Psoas muscle (tissue), 8 donors: ENCODE measurements at regions of chr1 and their contacts with region 1.

Region 1: DNA sequence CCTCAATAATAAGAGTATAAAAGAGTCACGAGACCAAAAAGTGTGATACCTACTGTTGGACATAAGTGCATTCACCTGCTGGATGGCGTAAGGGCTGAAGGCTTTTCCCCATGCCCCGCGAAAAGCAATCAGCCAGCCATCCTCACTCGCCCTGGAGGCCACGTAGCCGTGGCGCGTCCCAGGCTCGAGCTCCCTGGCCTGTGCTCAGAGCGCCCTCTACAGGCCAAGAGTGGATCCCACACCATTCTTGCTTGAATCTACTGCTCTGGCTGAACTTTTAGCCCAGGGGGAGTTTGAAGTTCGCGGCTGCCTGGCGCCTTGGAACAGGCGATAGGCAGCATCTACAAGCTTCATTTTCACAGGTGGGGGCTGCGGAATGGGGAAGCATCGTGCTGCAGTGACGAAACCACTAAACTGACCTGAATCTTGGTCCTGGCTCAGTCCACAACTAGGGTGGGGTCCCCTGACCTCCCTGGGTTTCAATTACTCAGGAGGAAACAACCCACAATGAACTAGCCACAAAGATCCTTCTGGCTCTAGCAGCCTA is 70.3 kb upstream of the SERBP1 start:
- DNase-seq: peak; percentile 87 to 89
- ATAC-seq: peak; percentile 97 to 99 (median 98)
- H3K4me3 ChIP-seq: no peak overlapping the region
- H3K27ac ChIP-seq: no peak overlapping the region
- H3K4me1 ChIP-seq: no peaks in the 10 kb centered on the region
- H3K27me3 ChIP-seq: no peaks in the 10 kb centered on the region
- CTCF ChIP-seq: peak; percentile 99

Region 2: GRCh38 chr1:67214420-67215174 is 285.9 kb before region 1 on chr1:
- intact Hi-C with region 1: loop called in 1 of 2 experiments (anchors 5 kb)
- DNase-seq: no peak
- ATAC-seq: no peak
- H3K4me3 ChIP-seq: no peak overlapping the region
- H3K27ac ChIP-seq: no peak overlapping the region
- H3K4me1 ChIP-seq: no peaks in the 10 kb centered on the region
- H3K27me3 ChIP-seq: peaks cover 0 to 2% (median 0%) of the 10 kb centered on the region in 3 donors
- CTCF ChIP-seq: peak; percentile 34

Region 3: GRCh38 chr1:67347688-67348472 is 152.6 kb before region 1 on chr1:
- intact Hi-C with region 1: loop called in 1 of 2 experiments (anchors 2 kb)
- DNase-seq: peak in 1 of 2 donors; percentile 27
- ATAC-seq: peak; percentile 82 to 97 (median 89)
- H3K4me3 ChIP-seq: no peak overlapping the region
- H3K27ac ChIP-seq: no peak overlapping the region
- H3K4me1 ChIP-seq: peaks cover 4% of the 10 kb centered on the region
- H3K27me3 ChIP-seq: no peaks in the 10 kb centered on the region
- CTCF ChIP-seq: peak; percentile 85

Region 4: DNA sequence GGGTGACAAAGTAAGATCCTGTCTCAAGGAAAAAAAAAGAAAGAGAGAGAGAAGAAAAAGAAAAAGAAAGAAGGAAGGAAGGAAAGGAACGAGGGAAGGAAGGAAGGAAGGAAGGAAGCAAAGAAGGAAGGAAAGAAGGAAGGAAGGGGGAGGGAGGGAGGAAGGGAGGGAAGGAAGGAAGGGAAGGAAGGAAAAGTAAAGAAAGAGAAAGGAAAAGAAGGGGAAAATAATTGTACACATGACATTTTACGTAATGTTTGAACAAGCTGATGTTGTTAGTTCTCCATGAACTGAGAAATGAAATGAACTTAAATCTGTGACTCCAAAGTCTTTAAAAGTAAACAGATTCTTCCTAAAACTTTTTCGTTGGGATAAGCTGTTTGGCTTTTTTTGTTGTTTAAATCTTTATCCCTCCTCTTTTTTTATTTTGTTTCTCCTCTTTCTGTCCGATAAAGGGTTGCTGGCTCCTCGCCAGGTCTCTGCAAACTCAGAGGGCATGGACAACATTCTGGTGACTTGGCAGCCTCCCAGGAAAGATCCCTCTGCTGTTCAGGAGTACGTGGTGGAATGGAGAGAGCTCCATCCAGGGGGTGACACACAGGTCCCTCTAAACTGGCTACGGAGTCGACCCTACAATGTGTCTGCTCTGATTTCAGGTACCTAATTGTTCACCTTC is 133.0 kb before region 1 on chr1:
- intact Hi-C with region 1: no loop called
- DNase-seq: peak in 1 of 2 donors; percentile 30
- ATAC-seq: no peak
- H3K4me3 ChIP-seq: no peak overlapping the region
- H3K27ac ChIP-seq: no peak overlapping the region
- H3K4me1 ChIP-seq: peaks cover 19% of the 10 kb centered on the region
- H3K27me3 ChIP-seq: no peaks in the 10 kb centered on the region
- CTCF ChIP-seq: no peak

Region 5: DNA sequence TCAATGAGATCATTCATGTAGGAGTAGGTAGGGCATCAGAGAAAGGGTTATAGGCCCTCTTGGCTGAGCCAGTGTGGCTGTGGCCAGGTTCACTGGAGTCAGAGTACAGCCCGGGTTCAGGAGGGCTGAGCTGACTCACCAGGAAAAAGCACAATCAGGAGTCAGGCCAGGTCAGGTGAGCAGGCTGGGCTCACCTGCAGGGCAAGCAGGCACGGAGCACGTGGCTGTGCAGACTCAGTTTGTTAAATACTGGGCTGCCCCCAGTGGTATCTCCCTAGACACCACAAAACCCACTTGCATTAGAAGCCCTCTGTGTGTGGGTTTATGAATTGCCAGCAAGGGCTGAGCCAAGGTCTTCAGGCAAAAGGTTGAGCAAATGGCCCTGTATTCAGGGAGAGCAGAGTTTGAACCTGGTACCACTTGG is 51.9 kb after region 1 on chr1:
- intact Hi-C with region 1: no loop called
- DNase-seq: no peak
- ATAC-seq: peak in 1 of 4 donors; percentile 30
- H3K4me3 ChIP-seq: no peak overlapping the region
- H3K27ac ChIP-seq: no peak overlapping the region
- H3K4me1 ChIP-seq: peaks cover 7% of the 10 kb centered on the region
- H3K27me3 ChIP-seq: no peaks in the 10 kb centered on the region
- CTCF ChIP-seq: no peak